Activated CD4-positive, alpha-beta memory T cell treated with anti-CD3 and anti-CD28 coated beads for 36 hours (primary cell): ENCODE measurements at regions of chr9 and their contacts with region 1.

Region 1: DNA sequence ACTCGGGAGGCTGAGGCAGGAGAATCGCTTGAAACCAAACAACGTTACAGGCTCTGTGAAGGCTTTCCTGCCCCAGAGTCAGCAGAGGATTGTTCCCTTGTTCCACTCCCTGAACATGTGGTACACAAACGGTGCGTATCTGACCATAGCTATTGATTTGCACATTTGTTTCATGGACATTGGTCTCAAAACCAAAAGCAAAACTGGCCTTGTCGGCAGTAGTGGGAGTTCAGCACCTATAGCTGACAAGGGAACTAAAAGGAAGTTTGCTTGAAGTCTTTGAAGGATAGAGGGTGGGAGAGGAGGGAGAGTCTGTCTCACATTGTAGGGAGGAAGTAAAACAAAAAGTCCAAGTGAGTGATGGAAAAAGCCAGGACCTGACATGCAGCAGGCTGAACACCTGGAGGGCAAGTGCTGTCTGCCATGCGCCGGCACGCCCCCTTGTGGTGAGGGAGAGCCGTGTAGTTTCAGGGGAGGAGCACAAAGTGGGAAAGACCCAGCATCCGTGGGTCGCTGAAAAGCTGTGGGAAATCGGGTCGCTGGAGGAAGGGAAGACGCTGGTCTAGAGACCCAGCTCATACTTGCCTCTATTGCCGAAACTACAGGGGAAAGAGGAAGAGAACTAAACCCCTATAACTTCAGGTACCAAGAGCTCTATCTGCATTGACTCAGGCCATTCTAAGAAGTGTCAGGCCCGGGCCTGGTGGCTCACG is 58.0 kb downstream of the RAD23B start:
- DNase-seq: peak; percentile 86
- H3K4me3 Mint-ChIP-seq: no peak overlapping the region
- H3K27ac Mint-ChIP-seq: no peak overlapping the region
- H3K4me1 Mint-ChIP-seq: peaks cover 9% of the 10 kb centered on the region
- H3K27me3 Mint-ChIP-seq: peaks cover 2% of the 10 kb centered on the region

Region 2: GRCh38 chr9:107158321-107158720 is 182.8 kb before region 1 on chr9:
- CTCF ChIA-PET with region 1: interaction called, 10 read pairs
- POLR2A ChIA-PET with region 1: no interaction called
- intact Hi-C with region 1: no loop called
- DNase-seq: no peak
- H3K4me3 Mint-ChIP-seq: no peak overlapping the region
- H3K27ac Mint-ChIP-seq: no peak overlapping the region
- H3K4me1 Mint-ChIP-seq: no peaks in the 10 kb centered on the region
- H3K27me3 Mint-ChIP-seq: peaks cover 4% of the 10 kb centered on the region

Region 3: DNA sequence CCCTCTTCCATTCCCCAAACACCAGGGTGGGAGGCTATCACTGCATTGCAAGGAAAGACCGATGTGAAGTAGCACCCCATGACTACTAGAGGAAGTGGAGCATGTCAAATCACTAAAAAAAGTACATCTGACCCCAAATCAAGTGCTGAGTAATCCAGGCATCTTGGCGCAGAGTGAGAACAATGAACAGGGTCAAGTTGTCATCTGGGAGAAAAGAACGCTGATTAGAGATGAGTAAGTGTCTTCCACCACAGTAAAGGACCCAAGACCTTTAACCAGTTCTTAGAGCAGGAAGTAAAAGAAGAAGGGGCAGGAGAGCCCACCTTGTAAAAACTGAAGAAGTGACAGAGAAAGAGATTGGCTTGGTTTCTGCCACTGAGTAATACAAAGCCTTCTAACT is 133.0 kb before region 1 on chr9:
- CTCF ChIA-PET with region 1: interaction called, 12 read pairs
- POLR2A ChIA-PET with region 1: no interaction called
- intact Hi-C with region 1: no loop called
- DNase-seq: no peak
- H3K4me3 Mint-ChIP-seq: no peak overlapping the region
- H3K27ac Mint-ChIP-seq: no peak overlapping the region
- H3K4me1 Mint-ChIP-seq: peaks cover 4% of the 10 kb centered on the region
- H3K27me3 Mint-ChIP-seq: peaks cover 8% of the 10 kb centered on the region

Region 4: GRCh38 chr9:107243751-107244150 is 97.3 kb before region 1 on chr9:
- CTCF ChIA-PET with region 1: interaction called, 30 read pairs
- POLR2A ChIA-PET with region 1: no interaction called
- intact Hi-C with region 1: loop called (anchors 1 kb)
- DNase-seq: peak; percentile 69
- H3K4me3 Mint-ChIP-seq: peak overlapping the region; percentile 38
- H3K27ac Mint-ChIP-seq: peak overlapping the region; percentile 79
- H3K4me1 Mint-ChIP-seq: peaks cover 26% of the 10 kb centered on the region
- H3K27me3 Mint-ChIP-seq: peaks cover 1% of the 10 kb centered on the region

Region 5: GRCh38 chr9:107309271-107309670 is 31.8 kb before region 1 on chr9:
- CTCF ChIA-PET with region 1: interaction called, 10 read pairs
- POLR2A ChIA-PET with region 1: no interaction called
- intact Hi-C with region 1: no loop called
- DNase-seq: no peak
- H3K4me3 Mint-ChIP-seq: no peak overlapping the region
- H3K27ac Mint-ChIP-seq: peak overlapping the region; percentile 25
- H3K4me1 Mint-ChIP-seq: peaks cover 58% of the 10 kb centered on the region
- H3K27me3 Mint-ChIP-seq: no peaks in the 10 kb centered on the region

Region 6: DNA sequence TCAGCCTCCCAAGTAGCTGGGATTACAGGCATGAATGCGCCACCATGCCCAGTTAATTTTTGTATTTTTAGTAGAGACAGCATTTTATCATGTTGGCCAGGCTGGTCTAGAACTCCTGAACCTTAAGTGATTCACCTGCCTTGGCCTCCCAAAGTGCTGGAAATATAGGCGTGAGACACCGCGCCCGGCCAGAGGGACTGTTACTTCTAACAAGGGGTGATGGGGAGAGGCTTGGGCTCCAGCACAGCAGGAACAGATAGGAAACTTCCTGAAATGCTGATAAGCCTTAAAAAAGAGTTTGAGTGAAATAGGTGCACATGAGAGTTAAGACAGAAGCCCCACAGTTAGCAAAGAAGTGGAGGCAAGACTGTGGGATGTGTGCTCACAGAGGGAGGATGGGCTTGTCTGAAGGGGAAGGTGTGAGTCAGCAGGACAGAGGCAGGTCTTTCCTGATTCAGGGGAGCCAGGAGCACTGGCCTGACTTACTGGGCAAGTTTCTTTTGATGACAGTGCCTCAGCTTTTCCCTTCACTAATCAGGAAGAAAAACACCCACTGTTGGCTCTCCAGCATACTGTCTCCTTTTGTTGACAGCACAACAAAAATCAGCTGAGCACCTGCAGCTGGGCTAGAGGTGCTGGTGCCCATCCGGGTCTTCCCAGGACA is 10.4 kb after region 1 on chr9:
- CTCF ChIA-PET with region 1: interaction called, 15 read pairs
- POLR2A ChIA-PET with region 1: no interaction called
- intact Hi-C with region 1: no loop called
- DNase-seq: no peak
- H3K4me3 Mint-ChIP-seq: no peak overlapping the region
- H3K27ac Mint-ChIP-seq: no peak overlapping the region
- H3K4me1 Mint-ChIP-seq: no peaks in the 10 kb centered on the region
- H3K27me3 Mint-ChIP-seq: peaks cover 12% of the 10 kb centered on the region

Region 7: DNA sequence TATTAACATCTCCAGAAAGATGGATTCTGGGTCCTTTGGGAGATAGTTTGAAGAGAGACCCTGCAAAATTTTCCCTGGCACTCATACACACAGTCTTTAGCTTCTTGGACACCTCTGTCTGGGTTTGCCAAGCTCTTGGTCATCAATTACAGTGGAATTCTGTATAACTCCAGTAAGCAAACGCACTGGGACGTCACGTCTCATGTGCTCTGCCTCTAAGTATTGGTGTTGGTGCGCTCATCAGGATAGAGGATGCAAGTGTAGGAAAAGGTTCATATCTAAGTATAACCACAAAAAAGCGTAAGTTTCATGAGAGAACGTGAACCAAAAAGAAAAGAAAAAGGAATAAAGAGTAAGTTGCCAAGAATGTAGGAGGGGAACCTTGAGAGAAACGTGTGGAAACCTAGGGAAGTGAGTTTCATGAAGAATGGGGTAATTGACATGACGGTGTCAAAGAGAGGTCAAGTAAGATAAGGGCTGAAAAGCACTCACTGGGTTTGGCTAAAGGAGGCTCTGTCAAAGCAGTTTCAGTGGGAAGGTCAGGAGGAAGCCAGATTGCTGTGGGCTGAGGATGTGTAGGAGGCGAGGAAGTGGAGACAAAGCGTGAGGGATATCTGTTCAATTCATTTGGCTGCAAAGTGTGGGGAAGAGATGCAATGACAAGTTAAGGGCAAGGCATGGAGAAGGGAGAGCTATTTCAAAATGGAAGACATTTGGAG is 34.7 kb after region 1 on chr9:
- CTCF ChIA-PET with region 1: no interaction called
- POLR2A ChIA-PET with region 1: no interaction called
- intact Hi-C with region 1: no loop called
- DNase-seq: no peak
- H3K4me3 Mint-ChIP-seq: no peak overlapping the region
- H3K27ac Mint-ChIP-seq: no peak overlapping the region
- H3K4me1 Mint-ChIP-seq: no peaks in the 10 kb centered on the region
- H3K27me3 Mint-ChIP-seq: peaks cover 8% of the 10 kb centered on the region